CD4-positive, alpha-beta T cell (primary cell): ENCODE measurements at regions of chr10 and their contacts with region 1.

Region 1: DNA sequence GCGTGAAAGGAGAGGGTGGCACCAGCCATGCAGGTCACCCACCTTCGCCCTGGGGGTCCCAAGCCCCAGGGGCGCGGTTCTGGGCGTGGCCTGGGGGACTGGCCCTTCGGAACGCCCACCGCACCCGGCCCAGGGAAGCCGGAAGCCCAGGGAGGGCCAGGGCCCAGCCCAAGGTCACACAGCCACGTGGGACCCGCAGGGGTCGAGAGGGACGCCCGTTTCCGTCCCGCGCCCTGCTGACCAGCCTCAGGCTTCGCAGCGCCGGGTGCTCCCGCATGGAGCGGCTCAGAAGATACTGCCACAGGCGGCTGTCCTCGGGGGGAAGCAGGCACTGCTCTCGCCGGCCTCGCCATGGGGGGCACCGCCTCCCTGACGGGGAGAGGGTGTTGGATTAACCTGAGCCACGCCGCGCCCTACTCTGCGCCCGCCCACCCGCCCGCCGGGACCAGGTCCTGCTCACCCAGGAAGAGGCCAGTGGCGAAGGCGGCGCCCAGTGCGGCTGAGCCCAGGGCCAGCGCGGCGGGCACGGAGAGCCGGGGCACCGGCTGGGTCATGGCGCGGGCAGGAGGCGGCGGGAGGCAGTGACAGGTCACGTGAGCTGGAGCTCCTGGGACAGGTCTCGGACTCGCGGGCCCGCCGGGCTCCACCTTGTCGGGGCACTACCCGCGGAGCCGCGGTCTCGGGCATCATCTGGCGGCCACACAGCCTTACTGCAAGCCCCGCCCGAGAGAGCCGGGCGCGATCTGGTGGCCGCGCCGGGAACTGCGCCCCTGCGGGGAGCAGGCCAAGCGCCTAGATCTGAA is at the start of gene COMTD1:
- DNase-seq: peak; percentile 87 to 96 (median 92)
- ATAC-seq: peak; percentile 64
- H3K4me3 ChIP-seq: peak within 1 kb of the TSS; percentile 80
- H3K4me3 Mint-ChIP-seq: peak within 1 kb of the TSS; percentile 88
- H3K27ac ChIP-seq: peak within 1 kb of the TSS; percentile 47 to 66
- H3K27ac Mint-ChIP-seq: peak within 1 kb of the TSS; percentile 90
- H3K4me1 ChIP-seq: peaks cover 28% of the 10 kb centered on the region
- H3K4me1 Mint-ChIP-seq: peaks cover 29% of the 10 kb centered on the region
- H3K27me3 ChIP-seq: no peaks in the 10 kb centered on the region
- H3K27me3 Mint-ChIP-seq: no peaks in the 10 kb centered on the region
- CTCF ChIP-seq: peak; percentile 100
- total RNA-seq, gene COMTD1: 9.5 to 10.5 TPM

Region 2: DNA sequence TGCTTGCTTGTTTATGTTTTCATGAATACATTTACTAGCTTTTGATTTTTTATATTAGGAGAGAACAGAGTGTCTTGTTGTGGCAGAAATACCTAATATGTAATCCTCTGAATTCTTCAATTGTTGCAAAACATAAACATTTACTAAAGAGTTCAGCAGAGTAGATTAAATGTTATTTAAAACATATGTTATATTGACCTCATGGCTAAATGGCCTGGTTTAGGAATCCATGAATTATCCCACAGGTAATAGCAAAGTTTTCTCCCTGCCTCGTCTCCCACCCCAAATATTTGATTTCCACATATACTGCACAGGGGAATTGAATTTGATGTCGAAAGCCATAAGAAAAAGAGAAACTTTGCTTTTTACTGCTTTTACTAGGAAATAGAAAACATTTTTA is 972.7 kb before region 1 on chr10:
- CTCF ChIA-PET with region 1: interaction called, 3 read pairs
- POLR2A ChIA-PET with region 1: no interaction called
- intact Hi-C with region 1: loop called (anchors 1 to 2 kb)
- DNase-seq: no peak
- ATAC-seq: no peak
- H3K4me3 ChIP-seq: no peak overlapping the region
- H3K4me3 Mint-ChIP-seq: no peak overlapping the region
- H3K27ac ChIP-seq: no peak overlapping the region
- H3K27ac Mint-ChIP-seq: no peak overlapping the region
- H3K4me1 ChIP-seq: peaks cover 4% of the 10 kb centered on the region
- H3K4me1 Mint-ChIP-seq: peaks cover 6% of the 10 kb centered on the region
- H3K27me3 ChIP-seq: no peaks in the 10 kb centered on the region
- H3K27me3 Mint-ChIP-seq: no peaks in the 10 kb centered on the region
- CTCF ChIP-seq: no peak

Region 3: DNA sequence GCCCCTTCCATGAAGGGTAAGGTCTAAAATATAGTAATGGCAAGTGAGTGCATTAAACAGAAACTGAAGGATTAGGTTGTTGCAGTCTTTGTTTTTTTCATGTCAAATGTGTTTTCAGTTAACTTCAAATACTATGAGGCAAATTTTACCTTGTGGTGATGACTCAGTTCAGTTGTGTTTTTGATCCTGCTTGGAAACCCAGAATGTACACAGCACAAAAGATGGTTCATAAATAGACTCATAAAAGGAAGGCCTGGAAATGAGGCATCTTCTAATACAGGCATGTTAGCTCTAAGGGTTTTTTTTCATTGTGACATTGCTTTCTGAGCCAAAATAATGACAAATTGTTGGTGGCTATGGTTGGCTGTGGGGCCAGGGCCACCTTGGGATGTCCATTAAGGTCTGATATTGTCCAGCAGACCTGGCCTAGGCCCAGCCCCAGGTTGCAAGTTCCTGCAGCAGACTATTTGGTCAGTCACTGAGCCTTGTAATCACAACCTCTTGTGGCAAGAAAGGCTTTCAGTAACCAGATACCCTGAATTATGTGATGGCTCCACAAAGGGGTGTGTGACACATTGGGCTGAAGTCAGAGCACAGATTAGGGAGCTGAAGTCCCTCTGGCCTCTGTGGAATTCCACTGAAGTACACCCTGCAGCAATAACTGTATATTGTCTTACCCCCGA is 193.1 kb before region 1 on chr10:
- CTCF ChIA-PET with region 1: no interaction called
- POLR2A ChIA-PET with region 1: no interaction called
- intact Hi-C with region 1: loop called in 1 of 2 experiments (anchors 10 kb)
- DNase-seq: no peak
- ATAC-seq: no peak
- H3K4me3 ChIP-seq: no peak overlapping the region
- H3K4me3 Mint-ChIP-seq: no peak overlapping the region
- H3K27ac ChIP-seq: no peak overlapping the region
- H3K27ac Mint-ChIP-seq: no peak overlapping the region
- H3K4me1 ChIP-seq: peaks cover 16% of the 10 kb centered on the region
- H3K4me1 Mint-ChIP-seq: peaks cover 9% of the 10 kb centered on the region
- H3K27me3 ChIP-seq: no peaks in the 10 kb centered on the region
- H3K27me3 Mint-ChIP-seq: no peaks in the 10 kb centered on the region
- CTCF ChIP-seq: no peak

Region 4: GRCh38 chr10:75187961-75188426 is 47.6 kb before region 1 on chr10:
- CTCF ChIA-PET with region 1: interaction called, 105 read pairs
- POLR2A ChIA-PET with region 1: interaction called, 71 read pairs
- intact Hi-C with region 1: loop called (anchors 1 kb)
- DNase-seq: peak; percentile 55 to 89 (median 64)
- ATAC-seq: peak; percentile 97
- H3K4me3 ChIP-seq: no peak overlapping the region
- H3K4me3 Mint-ChIP-seq: no peak overlapping the region
- H3K27ac ChIP-seq: peak overlapping the region in 1 of 2 donors; percentile 47
- H3K27ac Mint-ChIP-seq: peak overlapping the region; percentile 95
- H3K4me1 ChIP-seq: peaks cover 7% of the 10 kb centered on the region
- H3K4me1 Mint-ChIP-seq: peaks cover 8% of the 10 kb centered on the region
- H3K27me3 ChIP-seq: no peaks in the 10 kb centered on the region
- H3K27me3 Mint-ChIP-seq: no peaks in the 10 kb centered on the region
- CTCF ChIP-seq: peak; percentile 81

Region 5: DNA sequence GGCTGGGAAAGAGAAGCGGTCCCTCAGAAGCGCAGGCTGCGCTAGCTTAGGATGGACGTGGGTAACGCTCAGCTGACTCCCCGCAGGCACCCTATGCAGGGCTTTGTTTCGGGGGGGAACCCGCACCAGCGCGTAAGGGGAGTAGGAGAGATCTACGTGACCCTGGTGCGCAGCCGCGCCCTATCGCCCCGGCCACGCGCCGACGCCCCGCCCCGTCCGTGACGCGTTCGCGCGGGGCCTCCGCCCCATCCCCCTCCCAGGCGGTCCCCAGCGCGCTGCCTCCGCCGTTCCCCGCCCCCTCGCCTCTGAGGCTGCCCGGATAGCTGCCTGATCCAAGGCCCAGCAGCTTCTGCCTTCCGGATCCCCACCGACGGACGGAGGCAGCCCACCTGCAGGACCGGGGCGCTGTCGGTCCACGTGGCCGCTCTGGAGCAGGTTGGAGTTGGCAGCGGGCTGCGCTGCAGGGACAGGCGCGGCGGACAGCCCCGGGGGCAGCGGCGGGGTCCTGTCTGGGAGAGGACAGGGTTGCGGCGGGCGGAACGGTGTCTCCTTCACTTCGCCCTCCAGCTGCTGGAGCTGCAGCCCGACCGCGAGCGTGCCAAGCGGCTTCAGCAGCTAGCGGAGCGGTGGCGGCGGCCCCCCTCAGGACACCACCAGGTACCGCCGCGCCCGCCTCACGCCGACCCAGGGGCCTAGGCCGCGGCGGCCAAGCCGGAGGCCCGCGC is 25.1 kb before region 1 on chr10 and contains the start of gene VDAC2:
- CTCF ChIA-PET with region 1: interaction called, 53 read pairs
- POLR2A ChIA-PET with region 1: interaction called, 208 read pairs
- intact Hi-C with region 1: loop called (anchors 1 kb)
- DNase-seq: peak; percentile 91 to 98 (median 94)
- ATAC-seq: peak; percentile 81
- H3K4me3 ChIP-seq: peak within 1 kb of the TSS; percentile 73
- H3K4me3 Mint-ChIP-seq: peak within 1 kb of the TSS; percentile 97
- H3K27ac ChIP-seq: peak within 1 kb of the TSS; percentile 99
- H3K27ac Mint-ChIP-seq: peak within 1 kb of the TSS; percentile 99
- H3K4me1 ChIP-seq: peaks cover 28% of the 10 kb centered on the region
- H3K4me1 Mint-ChIP-seq: peaks cover 28% of the 10 kb centered on the region
- H3K27me3 ChIP-seq: no peaks in the 10 kb centered on the region
- H3K27me3 Mint-ChIP-seq: no peaks in the 10 kb centered on the region
- CTCF ChIP-seq: no peak
- total RNA-seq, gene VDAC2: 141 to 147 TPM